Tibial artery (tissue), 4 donors: ENCODE measurements at regions of chr2 and their contacts with region 1.

Region 1: DNA sequence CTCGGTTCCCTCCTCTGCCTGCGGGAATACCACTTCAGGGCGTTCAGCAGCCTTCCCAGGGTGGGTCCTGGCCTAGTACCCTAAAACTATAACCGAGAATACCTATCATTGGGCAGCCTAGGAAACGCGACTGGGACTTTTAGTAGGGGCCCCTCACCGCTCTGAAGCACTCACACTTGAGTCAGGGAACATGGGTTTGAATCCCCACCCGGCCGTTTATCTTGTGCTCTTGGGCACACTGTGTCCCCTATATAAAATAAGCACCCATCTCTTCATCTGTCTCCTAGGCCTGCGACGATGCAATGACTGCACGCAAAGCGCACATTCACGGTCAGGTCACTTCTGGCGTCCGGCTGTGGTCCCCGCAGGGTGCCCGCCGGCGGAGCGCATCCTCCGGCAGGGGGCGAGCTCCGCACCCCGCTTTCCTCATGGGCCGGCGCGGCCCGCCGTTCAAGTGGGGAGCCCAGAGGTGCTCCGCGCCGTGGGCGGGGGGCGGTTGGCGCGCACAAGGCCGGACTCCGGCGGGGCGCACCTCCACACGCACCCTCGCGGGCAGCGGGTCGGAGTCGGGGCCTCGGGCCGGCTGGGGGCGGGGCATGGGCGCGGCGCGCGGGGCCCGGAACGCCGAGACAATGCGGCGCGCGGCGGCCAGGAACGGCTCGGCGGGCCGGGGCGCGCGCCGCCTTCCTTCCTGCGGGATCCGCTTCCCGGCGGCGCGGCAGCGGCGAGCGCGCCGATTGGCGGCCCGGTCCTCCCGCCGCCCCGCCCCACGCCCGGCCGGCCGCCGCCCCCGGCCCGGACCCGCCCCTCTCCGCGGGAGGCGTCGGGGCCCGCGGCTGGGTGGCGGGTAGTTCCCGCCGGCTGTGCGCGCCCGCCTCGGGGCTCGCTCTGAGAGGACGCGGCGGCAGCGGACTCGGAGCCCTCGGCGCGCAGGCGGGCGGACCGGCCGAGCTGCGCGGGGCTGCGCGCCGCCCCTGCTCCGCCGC is at the start of gene ASAP2:
- DNase-seq: peak; percentile 68 to 83
- H3K4me3 ChIP-seq: peak within 1 kb of the TSS; percentile 95
- H3K27ac ChIP-seq: peak within 1 kb of the TSS; percentile 91 to 94
- H3K4me1 ChIP-seq: peaks cover 0 to 37% (median 10%) of the 10 kb centered on the region in 4 donors
- H3K27me3 ChIP-seq: no peaks in the 10 kb centered on the region
- CTCF ChIP-seq: peak; percentile 76 to 83

Region 2: DNA sequence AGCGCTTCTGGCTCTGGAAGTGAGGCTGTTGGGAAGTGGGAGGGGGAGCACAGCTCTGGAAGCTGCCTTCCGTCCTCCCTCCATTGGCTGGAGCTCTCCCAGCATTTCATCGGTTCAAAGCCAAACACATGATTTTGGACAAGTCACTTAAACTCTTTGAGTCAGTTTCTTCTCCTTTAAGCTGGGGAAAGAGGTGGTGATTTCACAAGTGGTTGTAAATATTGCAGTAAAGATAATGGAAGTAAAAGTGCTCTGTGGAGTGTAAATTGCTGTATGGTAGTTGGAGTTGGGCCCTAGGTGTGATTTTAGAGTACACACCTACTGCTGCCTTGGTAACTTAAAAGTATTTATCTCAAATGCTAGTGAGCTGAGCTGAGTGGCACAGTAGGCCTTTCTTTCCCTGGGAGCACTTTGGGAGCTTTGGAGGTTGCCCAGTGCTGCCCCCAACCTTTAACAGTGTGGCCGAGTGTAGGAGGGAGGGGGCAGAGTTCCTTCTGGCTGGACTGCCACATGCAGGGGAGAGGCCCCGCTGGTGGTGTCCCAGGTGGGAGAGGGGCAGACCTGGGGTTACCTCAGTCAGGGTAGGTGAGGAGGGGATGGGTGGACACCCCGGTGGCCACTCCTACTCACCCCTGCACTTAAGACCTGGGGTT is 55.1 kb after region 1 on chr2:
- intact Hi-C with region 1: loop called (anchors 10 kb)
- DNase-seq: peak; percentile 76 to 81
- H3K4me3 ChIP-seq: no peak overlapping the region
- H3K27ac ChIP-seq: peak overlapping the region; percentile 81 to 83
- H3K4me1 ChIP-seq: peaks cover 0 to 97% (median 75%) of the 10 kb centered on the region in 4 donors
- H3K27me3 ChIP-seq: no peaks in the 10 kb centered on the region
- CTCF ChIP-seq: no peak

Region 3: GRCh38 chr2:9333591-9334171 is 127.4 kb after region 1 on chr2:
- intact Hi-C with region 1: loop called (anchors 2 kb)
- DNase-seq: peak; percentile 70 to 86
- H3K4me3 ChIP-seq: no peak overlapping the region
- H3K27ac ChIP-seq: peak overlapping the region; percentile 33 to 45
- H3K4me1 ChIP-seq: peaks cover 0 to 47% (median 10%) of the 10 kb centered on the region in 4 donors
- H3K27me3 ChIP-seq: no peaks in the 10 kb centered on the region
- CTCF ChIP-seq: peak; percentile 79